Vagina (tissue), 2 donors: ENCODE measurements at regions of chr2 and their contacts with region 1.

Region 1: GRCh38 chr2:156704617-156705016 is 268.4 kb downstream of the GPD2 start:
- DNase-seq: no peak
- H3K4me3 ChIP-seq: no peak overlapping the region
- H3K27ac ChIP-seq: no peak overlapping the region
- H3K4me1 ChIP-seq: peaks cover 21% of the 10 kb centered on the region
- H3K27me3 ChIP-seq: no peaks in the 10 kb centered on the region
- CTCF ChIP-seq: no peak
- POLR2A ChIP-seq: no peak

Region 2: GRCh38 chr2:156099382-156099781 is 605.2 kb before region 1 on chr2:
- intact Hi-C with region 1: no loop called
- DNase-seq: no peak
- H3K4me3 ChIP-seq: no peak overlapping the region
- H3K27ac ChIP-seq: no peak overlapping the region
- H3K4me1 ChIP-seq: no peaks in the 10 kb centered on the region
- H3K27me3 ChIP-seq: no peaks in the 10 kb centered on the region
- CTCF ChIP-seq: no peak
- POLR2A ChIP-seq: no peak

Region 3: DNA sequence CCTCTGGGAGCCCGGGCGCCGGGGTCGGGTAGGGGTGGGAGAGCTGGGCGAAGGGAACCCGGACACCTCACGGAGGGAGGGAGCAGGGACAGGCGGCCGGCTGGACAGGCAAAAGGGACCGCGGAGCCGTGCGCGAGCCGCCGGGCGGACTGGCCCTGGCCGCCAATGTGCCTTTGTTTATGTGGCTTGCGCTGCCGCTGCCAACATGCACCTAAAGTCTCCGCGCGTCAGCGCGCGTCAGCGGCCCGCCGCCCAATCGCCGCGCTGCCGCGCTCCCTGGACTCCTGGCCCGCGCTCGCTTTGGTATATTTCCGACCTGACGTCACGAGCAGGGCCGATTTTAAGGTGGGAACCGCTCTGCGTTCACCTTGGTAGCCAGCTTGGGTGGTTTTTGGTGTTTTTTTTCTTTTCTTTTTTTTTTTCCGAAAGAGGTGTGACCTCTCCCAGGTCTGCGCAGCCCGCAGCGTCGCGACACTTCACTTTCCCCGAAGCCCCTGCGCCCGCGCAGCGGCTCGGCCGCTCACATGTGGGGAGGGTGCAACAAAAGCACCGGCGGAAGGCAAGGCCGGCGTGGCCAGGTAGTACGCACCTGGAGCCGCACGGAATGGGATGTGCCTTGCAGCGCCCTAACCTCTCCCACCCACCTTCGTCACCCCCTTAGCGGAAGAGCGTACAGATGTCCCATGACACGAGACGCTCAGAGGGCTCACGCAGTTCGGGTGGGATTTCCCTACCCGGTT is 371.9 kb before region 1 on chr2 and contains the start of gene NR4A2:
- intact Hi-C with region 1: loop called (anchors 5 kb)
- DNase-seq: peak in 1 of 2 donors; percentile 97
- H3K4me3 ChIP-seq: peak within 1 kb of the TSS; percentile 89
- H3K27ac ChIP-seq: peak within 1 kb of the TSS; percentile 100
- H3K4me1 ChIP-seq: peaks cover 12% of the 10 kb centered on the region
- H3K27me3 ChIP-seq: no peaks in the 10 kb centered on the region
- CTCF ChIP-seq: no peak
- POLR2A ChIP-seq: peak; percentile 16 to 88
- total RNA-seq, gene NR4A2: 17.2 TPM